Breast epithelium (tissue), 4 donors: ENCODE measurements at regions of chr4 and their contacts with region 1.

Region 1: GRCh38 chr4:19224820-19225219 is 1026.9 kb upstream of the SLIT2 start:
- DNase-seq: no peak
- H3K4me3 ChIP-seq: no peak overlapping the region
- H3K27ac ChIP-seq: no peak overlapping the region
- H3K4me1 ChIP-seq: no peaks in the 10 kb centered on the region
- H3K27me3 ChIP-seq: no peaks in the 10 kb centered on the region
- CTCF ChIP-seq: peak; percentile 20 to 40 (median 24)
- POLR2A ChIP-seq: no peak

Region 2: DNA sequence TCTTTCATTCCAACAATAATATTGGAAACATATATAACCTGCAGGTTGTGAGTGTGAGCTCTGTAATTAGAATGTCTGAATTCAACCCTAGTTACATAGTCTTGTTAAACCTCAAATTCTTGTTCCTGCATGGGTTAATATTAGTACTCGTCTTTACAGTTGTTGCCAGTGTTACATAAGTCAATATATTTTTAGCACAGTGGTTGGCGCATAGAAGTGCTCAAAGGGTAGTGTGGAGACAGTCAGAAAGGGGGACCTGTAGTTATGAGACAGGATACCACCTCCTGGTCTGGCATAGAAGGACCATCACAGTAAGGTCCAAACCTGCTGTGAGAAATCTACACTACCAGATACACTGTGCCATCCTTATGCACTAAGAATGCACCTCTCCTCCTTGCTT is 19.0 kb before region 1 on chr4:
- intact Hi-C with region 1: no loop called
- DNase-seq: no peak
- H3K4me3 ChIP-seq: no peak overlapping the region
- H3K27ac ChIP-seq: no peak overlapping the region
- H3K4me1 ChIP-seq: no peaks in the 10 kb centered on the region
- H3K27me3 ChIP-seq: no peaks in the 10 kb centered on the region
- CTCF ChIP-seq: no peak
- POLR2A ChIP-seq: no peak

Region 3: DNA sequence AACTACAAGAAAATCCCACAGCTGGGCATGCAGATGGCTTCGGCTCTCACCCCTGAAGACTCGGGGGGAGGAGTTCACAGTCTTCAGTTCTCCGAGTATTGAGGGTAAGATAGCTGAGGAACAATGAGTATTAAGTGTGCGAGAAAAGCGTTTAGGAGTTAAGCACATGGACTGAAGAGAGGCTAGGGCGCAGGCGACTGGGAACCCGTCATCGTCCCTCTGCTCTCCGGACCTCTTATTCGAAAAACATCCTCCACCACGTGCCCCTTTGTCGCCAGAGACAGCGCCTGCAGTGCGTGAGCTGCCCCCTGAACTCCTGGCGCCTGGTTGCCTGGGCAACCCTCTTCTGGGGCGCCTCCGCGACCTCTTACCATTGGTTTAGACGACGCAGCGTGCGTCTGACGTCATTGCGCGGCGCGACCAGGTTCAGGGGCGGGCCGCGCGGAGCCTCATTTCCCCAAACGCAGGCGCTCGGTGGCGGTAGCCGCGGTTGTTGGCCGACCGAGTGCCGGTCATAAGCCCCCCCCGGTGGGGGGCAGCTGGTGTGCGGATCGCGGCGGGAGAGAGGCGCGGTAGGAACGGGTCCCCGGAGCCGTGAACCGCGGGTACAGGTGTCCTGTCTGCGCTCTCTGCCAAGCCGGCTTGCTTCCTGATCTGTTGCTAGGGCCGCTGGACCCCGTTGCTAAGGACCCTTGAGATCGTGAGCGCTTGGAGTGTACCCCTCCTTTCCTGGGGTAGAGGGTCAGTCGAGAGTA is 1475.4 kb after region 1 on chr4 and contains the start of gene PACRGL:
- intact Hi-C with region 1: loop called (anchors 5 kb)
- DNase-seq: peak; percentile 87 to 89
- H3K4me3 ChIP-seq: peak within 1 kb of the TSS; percentile 74 to 89 (median 78)
- H3K27ac ChIP-seq: peak within 1 kb of the TSS; percentile 86 to 90
- H3K4me1 ChIP-seq: peaks cover 0 to 3% of the 10 kb centered on the region in 2 donors
- H3K27me3 ChIP-seq: no peaks in the 10 kb centered on the region
- CTCF ChIP-seq: no peak
- POLR2A ChIP-seq: no peak
- total RNA-seq, gene PACRGL: 25.4 to 53.4 (median 46.2) TPM